Dendritic cell treated with granulocyte-macrophage colony-stimulating factor and Interleukin-4, amounts not matched to agents 40 ng/mL and 50 ng/mL, for 4 days (primary cell): ENCODE measurements at regions of chr18 and their contacts with region 1.

Region 1: DNA sequence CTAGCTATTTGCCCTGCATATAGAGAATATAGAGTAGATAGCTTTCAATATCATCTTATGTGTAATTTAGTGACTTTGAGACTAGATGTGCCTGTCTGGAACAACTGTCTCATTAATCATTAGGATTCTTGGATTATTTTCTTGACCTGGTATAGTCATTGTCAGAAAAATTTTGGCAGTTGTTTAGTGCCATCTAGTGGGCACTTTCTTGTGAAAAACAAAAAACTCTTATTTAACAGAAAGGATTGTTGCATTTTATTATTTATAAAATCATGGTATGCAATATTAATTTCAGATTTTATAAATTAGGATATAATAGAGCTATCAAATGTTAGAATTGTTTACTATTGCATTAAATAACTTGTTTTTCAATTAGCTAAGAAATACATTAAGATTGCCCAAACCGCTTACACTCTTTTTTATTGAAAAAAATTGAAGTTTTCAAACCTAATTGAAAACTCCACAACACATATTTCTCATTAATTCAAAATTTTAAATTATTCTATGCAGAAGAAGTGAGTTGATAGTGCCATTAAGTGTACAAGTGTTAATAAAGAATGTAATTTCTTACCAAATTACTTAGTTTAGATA is 80.3 kb downstream of the DYNAP start:
- H3K4me3 Mint-ChIP-seq: no peak overlapping the region
- H3K27ac Mint-ChIP-seq: no peak overlapping the region
- H3K4me1 Mint-ChIP-seq: no peaks in the 10 kb centered on the region
- H3K27me3 Mint-ChIP-seq: no peaks in the 10 kb centered on the region

Region 2: GRCh38 chr18:53567929-53568574 is 1103.3 kb before region 1 on chr18:
- intact Hi-C with region 1: loop called (anchors 5 kb)
- H3K4me3 Mint-ChIP-seq: no peak overlapping the region
- H3K27ac Mint-ChIP-seq: no peak overlapping the region
- H3K4me1 Mint-ChIP-seq: no peaks in the 10 kb centered on the region
- H3K27me3 Mint-ChIP-seq: no peaks in the 10 kb centered on the region

Region 3: GRCh38 chr18:54382076-54382475 is 289.3 kb before region 1 on chr18:
- intact Hi-C with region 1: no loop called
- H3K4me3 Mint-ChIP-seq: no peak overlapping the region
- H3K27ac Mint-ChIP-seq: no peak overlapping the region
- H3K4me1 Mint-ChIP-seq: no peaks in the 10 kb centered on the region
- H3K27me3 Mint-ChIP-seq: peaks cover 1% of the 10 kb centered on the region

Region 4: DNA sequence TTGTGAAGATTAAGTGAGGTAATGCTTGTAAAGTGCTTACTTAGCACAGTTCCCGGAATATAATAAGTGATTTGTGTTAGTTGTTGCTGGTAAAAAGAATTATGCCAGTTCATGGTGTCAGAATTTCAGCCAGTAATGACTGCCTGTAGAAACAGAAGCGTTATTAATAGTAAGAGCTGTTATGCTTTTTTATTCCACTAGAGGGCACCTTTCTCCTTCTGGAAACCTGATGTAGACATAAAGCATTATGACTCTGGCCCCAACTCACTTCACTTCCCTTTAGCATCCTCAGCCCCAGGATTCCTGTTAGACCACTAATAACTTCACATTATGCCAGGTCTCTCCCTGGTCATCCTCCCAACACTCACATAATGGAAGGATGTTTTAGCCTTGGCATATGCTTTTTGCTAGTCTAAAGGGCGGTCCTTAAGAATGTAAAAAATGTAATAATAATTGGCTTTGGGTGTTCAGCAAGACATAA is 278.8 kb before region 1 on chr18:
- intact Hi-C with region 1: loop called (anchors 1 kb)
- H3K4me3 Mint-ChIP-seq: no peak overlapping the region
- H3K27ac Mint-ChIP-seq: no peak overlapping the region
- H3K4me1 Mint-ChIP-seq: peaks cover 13% of the 10 kb centered on the region
- H3K27me3 Mint-ChIP-seq: peaks cover 3% of the 10 kb centered on the region